Endothelial cell of umbilical vein (primary cell): ENCODE measurements at regions of chr5 and their contacts with region 1.

Region 1: DNA sequence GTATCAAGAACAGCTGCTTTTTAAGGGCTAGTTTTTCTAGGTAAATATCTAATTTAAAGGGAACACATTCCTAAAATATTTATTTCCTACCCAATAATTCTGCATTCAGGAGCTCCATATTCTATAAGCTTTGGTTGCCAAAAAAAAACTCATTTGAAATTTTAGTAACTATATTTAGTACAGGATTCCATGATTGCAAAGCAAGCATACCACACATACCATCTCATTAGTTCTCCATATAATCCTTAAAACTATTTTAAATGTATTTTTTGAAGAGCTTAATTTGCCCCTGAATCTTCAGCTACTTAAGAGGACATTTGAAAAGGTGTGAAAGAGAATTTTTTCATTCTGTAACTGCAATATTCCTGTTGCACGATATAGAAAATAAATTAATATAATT is 877.0 kb downstream of the NR2F1-AS1 start:
- DNase-seq: no peak
- H3K4me3 ChIP-seq: no peak overlapping the region
- H3K27ac ChIP-seq: no peak overlapping the region
- H3K4me1 ChIP-seq: no peaks in the 10 kb centered on the region
- H3K27me3 ChIP-seq: no peaks in the 10 kb centered on the region
- CTCF ChIP-seq: no peak
- POLR2A ChIP-seq: no peak

Region 2: GRCh38 chr5:92687821-92688722 is 15.9 kb before region 1 on chr5:
- CTCF ChIA-PET with region 1: interaction called, 10 read pairs
- POLR2A ChIA-PET with region 1: no interaction called
- dilution Hi-C with region 1: no loop called
- intact Hi-C with region 1: no loop called
- DNase-seq: peak; percentile 46
- H3K4me3 ChIP-seq: no peak overlapping the region
- H3K27ac ChIP-seq: no peak overlapping the region
- H3K4me1 ChIP-seq: no peaks in the 10 kb centered on the region
- H3K27me3 ChIP-seq: no peaks in the 10 kb centered on the region
- CTCF ChIP-seq: no peak
- POLR2A ChIP-seq: no peak